Heart right ventricle (tissue), 16 donors: ENCODE measurements at regions of chr19 and their contacts with region 1.

Region 1: DNA sequence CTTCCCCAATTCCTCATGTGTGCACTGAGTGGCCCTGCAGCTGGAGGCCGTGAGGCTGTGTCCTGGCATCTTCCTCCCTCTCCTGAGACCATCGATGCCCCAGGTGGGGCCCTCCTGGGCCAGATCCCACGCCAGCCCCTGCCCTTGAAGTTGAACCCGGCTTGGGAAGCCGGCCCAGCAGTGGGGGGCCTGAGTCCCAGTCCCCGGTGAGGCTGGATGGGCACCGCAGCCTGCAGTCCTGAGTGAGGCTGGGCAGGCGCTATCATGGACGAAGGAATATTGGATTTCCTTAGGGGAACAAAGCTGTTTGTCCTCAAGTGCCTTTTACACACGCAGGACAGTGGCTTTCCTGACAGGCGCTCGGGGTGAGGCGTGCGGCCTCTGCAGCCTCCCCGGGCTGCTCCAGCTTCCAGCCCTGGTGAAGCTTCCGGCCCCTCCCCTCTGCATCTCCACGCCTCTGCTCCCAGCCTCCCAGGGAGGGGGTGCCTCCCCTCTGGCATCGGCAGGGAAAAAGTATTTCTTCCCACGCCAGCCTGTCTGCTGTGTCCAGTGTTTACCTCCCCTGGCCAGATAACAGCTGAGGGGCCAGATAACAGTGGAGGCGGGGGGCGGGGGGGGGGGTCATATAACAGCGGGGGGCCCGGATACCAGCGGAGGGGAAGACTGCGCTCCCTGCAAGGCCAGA is 159.5 kb downstream of the KDM4B start:
- DNase-seq: peak; percentile 78 to 80
- ATAC-seq: peak; percentile 82 to 93 (median 90)
- H3K4me3 ChIP-seq: no peak overlapping the region
- H3K27ac ChIP-seq: peak overlapping the region in 7 of 10 donors; percentile 50 to 83 (median 63)
- H3K4me1 ChIP-seq: peaks cover 28 to 47% (median 41%) of the 10 kb centered on the region in 9 donors
- H3K27me3 ChIP-seq: no peaks in the 10 kb centered on the region
- CTCF ChIP-seq: no peak

Region 2: DNA sequence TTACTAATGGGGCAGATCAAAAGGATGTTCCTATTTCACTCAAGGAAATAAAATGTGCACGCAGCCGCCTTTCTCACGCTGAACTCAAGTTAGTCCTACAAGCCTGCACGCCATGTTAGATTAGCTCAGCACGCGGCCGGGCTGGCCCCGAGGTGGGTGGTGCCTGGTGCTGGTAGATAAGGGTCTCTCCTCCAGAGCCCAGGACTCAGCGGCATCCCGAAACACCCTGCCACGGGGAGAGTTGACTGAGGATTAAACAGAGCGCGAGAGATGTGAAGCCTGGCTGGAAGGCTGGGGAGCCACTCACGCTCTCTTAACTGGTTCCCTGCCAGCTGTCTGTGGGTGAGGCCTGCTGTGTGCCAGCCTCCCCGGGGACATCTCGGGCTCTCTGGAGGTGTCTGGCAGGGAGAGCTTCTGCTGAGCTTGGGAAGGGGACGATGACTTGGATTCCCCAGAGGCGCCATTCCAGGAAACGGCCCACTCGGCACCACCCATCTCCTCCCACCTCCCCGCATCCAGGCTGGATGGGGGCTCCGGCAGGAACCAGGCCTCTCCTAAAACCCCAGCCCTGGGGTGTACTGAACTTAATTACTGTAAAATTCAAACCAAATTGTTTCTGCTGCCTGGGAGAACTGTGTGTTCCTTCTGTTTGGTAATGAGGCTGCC is 37.2 kb before region 1 on chr19:
- intact Hi-C with region 1: loop called in 1 of 10 experiments (anchors 5 kb)
- DNase-seq: peak; percentile 49 to 54
- ATAC-seq: peak; percentile 41 to 79 (median 54)
- H3K4me3 ChIP-seq: no peak overlapping the region
- H3K27ac ChIP-seq: peak overlapping the region; percentile 6 to 85 (median 50)
- H3K4me1 ChIP-seq: peaks cover 29 to 39% (median 35%) of the 10 kb centered on the region in 9 donors
- H3K27me3 ChIP-seq: no peaks in the 10 kb centered on the region
- CTCF ChIP-seq: no peak

Region 3: DNA sequence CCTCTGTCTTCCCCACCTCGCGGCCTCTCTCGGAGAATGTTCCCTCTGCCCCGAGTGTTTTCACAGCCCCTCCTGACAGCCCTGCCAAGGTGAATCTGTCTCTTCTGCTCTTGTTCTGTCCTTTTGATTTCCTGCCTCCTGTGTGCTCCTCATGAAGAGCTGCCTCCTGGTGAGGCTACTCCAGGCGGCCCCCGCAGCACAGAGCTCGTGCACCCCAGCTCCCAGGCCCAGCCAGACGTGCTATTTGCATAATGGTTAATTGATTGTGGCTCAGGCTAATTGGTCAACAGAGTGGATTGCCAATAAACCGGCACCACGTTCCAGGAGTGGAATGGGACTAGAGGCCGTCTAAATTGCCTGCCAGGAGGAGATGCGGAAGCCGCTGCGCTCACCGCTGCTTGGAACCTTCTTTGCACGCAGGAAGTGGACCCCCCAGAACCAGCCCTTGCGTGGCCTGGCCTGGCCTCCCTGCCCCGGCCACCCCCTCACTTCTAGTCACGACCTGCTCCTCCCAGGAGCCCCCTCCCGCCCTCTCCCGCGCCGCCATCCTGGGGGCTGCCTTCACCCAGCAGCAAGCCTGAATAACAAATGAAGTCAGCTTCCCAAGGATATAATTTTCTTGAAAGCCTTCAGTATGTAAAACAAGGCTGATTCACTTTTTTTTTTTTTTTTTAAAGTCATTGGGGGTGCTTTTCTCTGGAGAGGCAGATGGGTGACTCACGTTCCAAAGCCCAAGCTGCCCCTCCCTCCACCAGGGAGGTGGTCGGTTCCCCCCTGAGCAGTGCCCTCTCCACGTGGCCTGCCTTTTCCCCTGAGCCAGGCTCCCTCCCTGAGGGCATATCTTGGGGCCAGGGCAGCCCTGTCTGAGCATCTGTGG is 15.5 kb before region 1 on chr19:
- intact Hi-C with region 1: no loop called
- DNase-seq: no peak
- ATAC-seq: no peak
- H3K4me3 ChIP-seq: no peak overlapping the region
- H3K27ac ChIP-seq: no peak overlapping the region
- H3K4me1 ChIP-seq: peaks cover 0 to 28% (median 13%) of the 10 kb centered on the region in 9 donors
- H3K27me3 ChIP-seq: no peaks in the 10 kb centered on the region
- CTCF ChIP-seq: no peak